T-cell (primary cell): ENCODE measurements at regions of chr7 and their contacts with region 1.

Region 1: GRCh38 chr7:121530227-121531174 is 134.4 kb upstream of the FAM3C start:
- DNase-seq: peak in 32 of 35 experiments; percentile 0 to 62 (median 21)
- ATAC-seq: peak; percentile 90 to 99 (median 92)
- H3K4me3 ChIP-seq: no peak overlapping the region
- H3K4me3 Mint-ChIP-seq: peak overlapping the region in 1 of 3 donors; percentile 29
- H3K27ac ChIP-seq: peak overlapping the region; percentile 65
- H3K27ac Mint-ChIP-seq: peak overlapping the region; percentile 79 to 85
- H3K4me1 ChIP-seq: no peaks in the 10 kb centered on the region
- H3K4me1 Mint-ChIP-seq: peaks cover 0 to 21% (median 19%) of the 10 kb centered on the region in 3 donors
- H3K27me3 ChIP-seq: peaks cover 0 to 3% of the 10 kb centered on the region in 2 experiments
- H3K27me3 Mint-ChIP-seq: peaks cover 0 to 4% of the 10 kb centered on the region in 2 donors

Region 2: GRCh38 chr7:121547544-121548092 is 17.1 kb after region 1 on chr7:
- CTCF ChIA-PET with region 1: interaction called in 1 of 2 experiments, 11 read pairs
- POLR2A ChIA-PET with region 1: no interaction called
- DNase-seq: peak in 2 of 35 experiments; percentile 19 to 74
- ATAC-seq: peak; percentile 64 to 75 (median 70)
- H3K4me3 ChIP-seq: no peak overlapping the region
- H3K4me3 Mint-ChIP-seq: no peak overlapping the region
- H3K27ac ChIP-seq: no peak overlapping the region
- H3K27ac Mint-ChIP-seq: no peak overlapping the region
- H3K4me1 ChIP-seq: no peaks in the 10 kb centered on the region
- H3K4me1 Mint-ChIP-seq: peaks cover 0 to 19% (median 16%) of the 10 kb centered on the region in 3 donors
- H3K27me3 ChIP-seq: no peaks in the 10 kb centered on the region
- H3K27me3 Mint-ChIP-seq: peaks cover 0 to 3% of the 10 kb centered on the region in 2 donors

Region 3: GRCh38 chr7:121563177-121563576 is 32.7 kb after region 1 on chr7:
- CTCF ChIA-PET with region 1: no interaction called
- POLR2A ChIA-PET with region 1: no interaction called
- DNase-seq: no peak
- ATAC-seq: no peak
- H3K4me3 ChIP-seq: no peak overlapping the region
- H3K4me3 Mint-ChIP-seq: no peak overlapping the region
- H3K27ac ChIP-seq: no peak overlapping the region
- H3K27ac Mint-ChIP-seq: no peak overlapping the region
- H3K4me1 ChIP-seq: no peaks in the 10 kb centered on the region
- H3K4me1 Mint-ChIP-seq: no peaks in the 10 kb centered on the region
- H3K27me3 ChIP-seq: no peaks in the 10 kb centered on the region
- H3K27me3 Mint-ChIP-seq: peaks cover 6 to 13% of the 10 kb centered on the region in 2 donors

Region 4: DNA sequence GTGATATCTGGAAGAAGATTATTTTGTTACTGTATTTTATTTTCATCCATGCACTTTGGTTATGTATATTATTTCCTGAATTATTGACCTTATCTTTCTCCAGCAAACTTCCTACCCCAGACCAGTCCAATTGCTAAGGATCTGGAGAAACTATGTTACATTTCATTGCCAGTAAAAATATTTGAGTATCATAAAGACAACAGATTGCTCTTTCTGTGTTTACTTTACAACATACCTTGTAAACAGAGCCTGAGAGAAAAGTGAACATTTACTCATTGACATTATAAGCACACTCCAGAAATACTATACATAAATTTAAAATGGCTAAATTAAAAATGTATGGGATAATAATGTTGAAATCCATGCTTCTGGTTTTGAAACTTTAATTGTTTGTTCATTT is 51.8 kb after region 1 on chr7:
- CTCF ChIA-PET with region 1: no interaction called
- POLR2A ChIA-PET with region 1: no interaction called
- DNase-seq: no peak
- ATAC-seq: no peak
- H3K4me3 ChIP-seq: no peak overlapping the region
- H3K4me3 Mint-ChIP-seq: no peak overlapping the region
- H3K27ac ChIP-seq: no peak overlapping the region
- H3K27ac Mint-ChIP-seq: no peak overlapping the region
- H3K4me1 ChIP-seq: no peaks in the 10 kb centered on the region
- H3K4me1 Mint-ChIP-seq: no peaks in the 10 kb centered on the region
- H3K27me3 ChIP-seq: peaks cover 0 to 2% of the 10 kb centered on the region in 2 experiments
- H3K27me3 Mint-ChIP-seq: peaks cover 17 to 21% of the 10 kb centered on the region in 2 donors